HCT116 (cell line): ENCODE measurements at regions of chr6 and their contacts with region 1.

Region 1: DNA sequence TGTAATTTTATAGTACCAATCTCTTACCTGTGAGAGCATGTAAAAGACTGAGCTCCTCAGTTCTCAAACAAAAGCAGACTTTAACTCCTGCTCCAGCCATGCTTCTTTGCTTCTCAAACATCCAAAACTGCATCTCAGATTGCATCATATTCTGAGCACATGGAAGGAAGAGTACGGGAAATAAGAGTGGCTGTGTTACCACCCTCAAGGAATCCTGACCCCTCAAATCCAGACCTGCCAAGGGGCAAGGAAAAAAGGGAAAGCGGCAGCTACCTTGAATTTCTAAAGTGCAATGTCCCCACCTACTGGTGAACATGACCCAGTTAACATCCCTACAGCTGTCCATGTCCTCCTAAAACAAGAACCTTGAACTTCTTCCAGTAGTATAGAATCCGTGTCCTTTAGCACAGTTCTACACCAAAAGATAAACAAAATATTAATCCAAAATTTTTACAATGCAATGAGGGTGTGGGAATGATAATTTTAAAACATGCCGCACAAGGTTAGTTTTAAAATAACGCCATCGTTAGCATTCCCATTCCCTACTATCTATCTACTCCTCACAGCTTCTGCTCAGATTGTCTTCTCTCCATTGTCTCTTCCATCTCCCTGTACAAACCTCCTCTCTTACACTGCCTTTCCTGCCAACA is 34.1 kb upstream of the HLA-DQB1 start:
- DNase-seq: peak; percentile 61
- ATAC-seq: peak; percentile 93
- H3K4me3 ChIP-seq: no peak overlapping the region
- H3K27ac ChIP-seq: no peak overlapping the region
- H3K4me1 ChIP-seq: no peaks in the 10 kb centered on the region
- H3K27me3 ChIP-seq: no peaks in the 10 kb centered on the region
- CTCF ChIP-seq: peak; percentile 68 to 83 (median 75)
- POLR2A ChIP-seq: no peak
- RAD21 ChIP-seq: peak; percentile 87

Region 2: DNA sequence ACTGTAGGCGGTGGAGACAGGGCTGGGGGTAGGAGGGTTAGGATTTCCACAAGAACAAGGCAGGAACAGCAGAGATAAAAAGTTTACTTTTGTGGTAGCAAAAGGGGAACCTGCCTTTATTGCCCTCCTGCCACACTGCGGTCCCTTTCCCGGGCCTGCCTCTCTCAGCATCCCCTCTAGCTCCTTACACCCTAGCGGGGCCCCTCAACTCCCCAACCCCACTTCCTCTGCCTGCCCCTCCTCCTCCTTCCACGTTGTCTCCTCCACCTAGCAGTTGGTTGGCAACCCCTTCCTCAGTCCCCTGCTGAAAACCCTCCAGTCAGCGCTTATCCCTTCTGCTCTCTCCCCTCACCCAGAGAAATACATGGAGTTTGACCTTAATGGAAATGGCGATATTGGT is 1084.8 kb before region 1 on chr6:
- CTCF ChIA-PET with region 1: no interaction called
- POLR2A ChIA-PET with region 1: no interaction called
- RAD21 ChIA-PET with region 1: no interaction called
- intact Hi-C with region 1: no loop called
- DNase-seq: no peak
- ATAC-seq: no peak
- H3K4me3 ChIP-seq: no peak overlapping the region
- H3K27ac ChIP-seq: no peak overlapping the region
- H3K4me1 ChIP-seq: peaks cover 0 to 6% of the 10 kb centered on the region in 2 experiments; a peak in 3 of 4 replicates
- H3K27me3 ChIP-seq: no peaks in the 10 kb centered on the region
- CTCF ChIP-seq: no peak
- POLR2A ChIP-seq: no peak
- RAD21 ChIP-seq: no peak

Region 3: GRCh38 chr6:32118782-32119628 is 581.5 kb before region 1 on chr6:
- CTCF ChIA-PET with region 1: no interaction called
- POLR2A ChIA-PET with region 1: no interaction called
- RAD21 ChIA-PET with region 1: no interaction called
- intact Hi-C with region 1: loop called (anchors 5 kb)
- DNase-seq: peak; percentile 59
- ATAC-seq: peak; percentile 94
- H3K4me3 ChIP-seq: no peak overlapping the region
- H3K27ac ChIP-seq: no peak overlapping the region; the same call in 1 of the 2 replicates
- H3K4me1 ChIP-seq: peaks cover 0 to 21% of the 10 kb centered on the region in 2 experiments; a peak in 2 of 4 replicates
- H3K27me3 ChIP-seq: no peaks in the 10 kb centered on the region
- CTCF ChIP-seq: peak; percentile 83 to 98 (median 92)
- POLR2A ChIP-seq: no peak
- RAD21 ChIP-seq: peak; percentile 94

Region 4: GRCh38 chr6:32413427-32414047 is 287.0 kb before region 1 on chr6:
- CTCF ChIA-PET with region 1: interaction called, 21 read pairs
- POLR2A ChIA-PET with region 1: no interaction called
- RAD21 ChIA-PET with region 1: no interaction called
- intact Hi-C with region 1: loop called (anchors 1 kb)
- DNase-seq: peak; percentile 69
- ATAC-seq: peak; percentile 85
- H3K4me3 ChIP-seq: no peak overlapping the region; a peak in 1 of 4 replicates
- H3K27ac ChIP-seq: no peak overlapping the region
- H3K4me1 ChIP-seq: peaks cover 0 to 12% of the 10 kb centered on the region in 2 experiments; a peak in 2 of 4 replicates
- H3K27me3 ChIP-seq: no peaks in the 10 kb centered on the region
- CTCF ChIP-seq: peak; percentile 73 to 91 (median 88)
- POLR2A ChIP-seq: no peak
- RAD21 ChIP-seq: peak; percentile 89

Region 5: GRCh38 chr6:32432050-32432450 is 268.5 kb before region 1 on chr6:
- CTCF ChIA-PET with region 1: interaction called, 12 read pairs
- POLR2A ChIA-PET with region 1: no interaction called
- RAD21 ChIA-PET with region 1: interaction called, 4 to 6 read pairs
- intact Hi-C with region 1: loop called (anchors 2 kb)
- DNase-seq: peak; percentile 40
- ATAC-seq: no peak
- H3K4me3 ChIP-seq: no peak overlapping the region
- H3K27ac ChIP-seq: no peak overlapping the region
- H3K4me1 ChIP-seq: no peaks in the 10 kb centered on the region
- H3K27me3 ChIP-seq: no peaks in the 10 kb centered on the region
- CTCF ChIP-seq: peak; percentile 13 to 79 (median 55); a peak in 5 of 6 replicates
- POLR2A ChIP-seq: no peak
- RAD21 ChIP-seq: peak; percentile 83

Region 6: GRCh38 chr6:32785781-32786533 is 85.4 kb after region 1 on chr6:
- CTCF ChIA-PET with region 1: interaction called, 34 read pairs
- POLR2A ChIA-PET with region 1: interaction called, 3 read pairs
- RAD21 ChIA-PET with region 1: interaction called, 3 to 10 read pairs
- intact Hi-C with region 1: no loop called
- DNase-seq: peak; percentile 64
- ATAC-seq: peak; percentile 99
- H3K4me3 ChIP-seq: no peak overlapping the region
- H3K27ac ChIP-seq: no peak overlapping the region
- H3K4me1 ChIP-seq: peaks cover 0 to 8% of the 10 kb centered on the region in 2 experiments; a peak in 2 of 4 replicates
- H3K27me3 ChIP-seq: no peaks in the 10 kb centered on the region
- CTCF ChIP-seq: peak; percentile 65 to 72 (median 69)
- POLR2A ChIP-seq: no peak
- RAD21 ChIP-seq: peak; percentile 87

Region 7: GRCh38 chr6:32796848-32797776 is 96.6 kb after region 1 on chr6:
- CTCF ChIA-PET with region 1: interaction called, 3 read pairs
- POLR2A ChIA-PET with region 1: no interaction called
- RAD21 ChIA-PET with region 1: interaction called in 1 of 2 experiments, 3 read pairs
- intact Hi-C with region 1: loop called (anchors 2 kb)
- DNase-seq: peak; percentile 31
- ATAC-seq: peak; percentile 93
- H3K4me3 ChIP-seq: peak overlapping the region; percentile 24 to 45
- H3K27ac ChIP-seq: no peak overlapping the region
- H3K4me1 ChIP-seq: peaks cover 0 to 5% of the 10 kb centered on the region in 2 experiments; a peak in 1 of 4 replicates
- H3K27me3 ChIP-seq: peaks cover 34% of the 10 kb centered on the region
- CTCF ChIP-seq: peak; percentile 67 to 91 (median 72); a peak in 5 of 6 replicates
- POLR2A ChIP-seq: no peak
- RAD21 ChIP-seq: peak; percentile 86

Region 8: GRCh38 chr6:33161354-33162331 is 461.1 kb after region 1 on chr6:
- CTCF ChIA-PET with region 1: no interaction called
- POLR2A ChIA-PET with region 1: no interaction called
- RAD21 ChIA-PET with region 1: no interaction called
- intact Hi-C with region 1: no loop called
- DNase-seq: peak; percentile 18
- ATAC-seq: peak; percentile 89
- H3K4me3 ChIP-seq: peak overlapping the region; percentile 52 to 61
- H3K27ac ChIP-seq: peak overlapping the region; percentile 40
- H3K4me1 ChIP-seq: peaks cover 11 to 29% of the 10 kb centered on the region in 2 experiments
- H3K27me3 ChIP-seq: no peaks in the 10 kb centered on the region
- CTCF ChIP-seq: peak; percentile 72 to 91 (median 90); a peak in 5 of 6 replicates
- POLR2A ChIP-seq: peak; percentile 17
- RAD21 ChIP-seq: peak; percentile 68